Activated CD8-positive, alpha-beta T cell treated with anti-CD3 and anti-CD28 coated beads, Interleukin-2, amount 10 ng/mL, durations not matched to agents 7 days and 5 days (primary cell): ENCODE measurements at regions of chr12 and their contacts with region 1.

Region 1: GRCh38 chr12:8544295-8544694 is 3.6 kb upstream of the CLEC4E start:
- DNase-seq: peak; percentile 83
- ATAC-seq: peak; percentile 76
- H3K4me3 Mint-ChIP-seq: no peak overlapping the region
- H3K27ac Mint-ChIP-seq: no peak overlapping the region
- H3K4me1 Mint-ChIP-seq: peaks cover 9% of the 10 kb centered on the region
- H3K27me3 Mint-ChIP-seq: peaks cover 43% of the 10 kb centered on the region

Region 2: GRCh38 chr12:8519171-8519570 is 25.1 kb before region 1 on chr12:
- CTCF ChIA-PET with region 1: interaction called, 20 read pairs
- POLR2A ChIA-PET with region 1: no interaction called
- DNase-seq: no peak
- ATAC-seq: no peak
- H3K4me3 Mint-ChIP-seq: no peak overlapping the region
- H3K27ac Mint-ChIP-seq: no peak overlapping the region
- H3K4me1 Mint-ChIP-seq: no peaks in the 10 kb centered on the region
- H3K27me3 Mint-ChIP-seq: peaks cover 53% of the 10 kb centered on the region

Region 3: DNA sequence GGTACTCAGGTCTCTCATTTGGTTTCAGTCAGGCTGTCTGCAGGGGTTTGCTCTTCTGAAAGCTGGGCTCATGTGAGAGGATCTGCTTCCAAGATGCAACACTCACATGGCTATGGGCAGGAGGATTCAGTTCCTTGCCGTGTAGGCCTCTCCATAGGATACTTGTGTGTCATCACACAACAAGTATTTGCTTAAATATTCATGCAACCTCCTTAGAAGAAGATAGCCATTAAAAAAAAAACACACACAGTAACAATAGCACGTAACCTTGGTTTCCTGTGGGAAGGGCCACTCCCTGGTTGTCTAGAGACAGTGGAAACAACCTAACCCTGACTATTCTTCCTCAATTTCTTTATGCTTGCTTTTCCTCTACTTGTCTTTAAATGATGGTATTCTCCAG is 28.2 kb after region 1 on chr12:
- CTCF ChIA-PET with region 1: interaction called, 18 read pairs
- POLR2A ChIA-PET with region 1: no interaction called
- DNase-seq: no peak
- ATAC-seq: peak; percentile 47
- H3K4me3 Mint-ChIP-seq: no peak overlapping the region
- H3K27ac Mint-ChIP-seq: no peak overlapping the region
- H3K4me1 Mint-ChIP-seq: peaks cover 10% of the 10 kb centered on the region
- H3K27me3 Mint-ChIP-seq: no peaks in the 10 kb centered on the region

Region 4: DNA sequence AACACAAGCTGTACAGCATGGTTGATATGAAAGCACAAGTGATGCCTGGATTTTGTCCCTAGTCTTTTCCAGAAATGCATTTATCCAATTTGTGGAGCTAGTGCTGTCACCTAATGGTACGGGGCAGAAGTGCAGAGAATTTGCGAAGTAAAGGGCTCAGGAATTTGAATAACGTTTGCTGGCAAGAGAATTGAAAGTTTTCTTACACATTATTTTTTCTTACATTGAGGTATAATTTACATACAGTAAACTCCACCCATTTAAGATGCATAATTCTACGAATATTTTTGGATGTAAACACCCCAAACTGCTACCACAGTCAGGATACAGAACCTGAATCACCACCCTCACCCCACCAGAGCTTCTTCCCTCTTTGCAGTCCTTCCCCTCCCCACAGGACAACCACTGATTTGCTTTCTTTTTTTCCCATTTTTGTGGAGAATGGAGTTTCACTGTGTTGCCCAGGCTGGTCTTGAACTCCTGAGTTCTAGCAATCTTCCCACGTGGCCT is 64.8 kb after region 1 on chr12:
- CTCF ChIA-PET with region 1: interaction called, 34 read pairs
- POLR2A ChIA-PET with region 1: no interaction called
- DNase-seq: peak; percentile 28
- ATAC-seq: no peak
- H3K4me3 Mint-ChIP-seq: no peak overlapping the region
- H3K27ac Mint-ChIP-seq: no peak overlapping the region
- H3K4me1 Mint-ChIP-seq: peaks cover 10% of the 10 kb centered on the region
- H3K27me3 Mint-ChIP-seq: peaks cover 15% of the 10 kb centered on the region

Region 5: GRCh38 chr12:8668441-8668840 is 124.1 kb after region 1 on chr12:
- CTCF ChIA-PET with region 1: no interaction called
- POLR2A ChIA-PET with region 1: no interaction called
- DNase-seq: no peak
- ATAC-seq: no peak
- H3K4me3 Mint-ChIP-seq: no peak overlapping the region
- H3K27ac Mint-ChIP-seq: no peak overlapping the region
- H3K4me1 Mint-ChIP-seq: no peaks in the 10 kb centered on the region
- H3K27me3 Mint-ChIP-seq: peaks cover 13% of the 10 kb centered on the region

Region 6: DNA sequence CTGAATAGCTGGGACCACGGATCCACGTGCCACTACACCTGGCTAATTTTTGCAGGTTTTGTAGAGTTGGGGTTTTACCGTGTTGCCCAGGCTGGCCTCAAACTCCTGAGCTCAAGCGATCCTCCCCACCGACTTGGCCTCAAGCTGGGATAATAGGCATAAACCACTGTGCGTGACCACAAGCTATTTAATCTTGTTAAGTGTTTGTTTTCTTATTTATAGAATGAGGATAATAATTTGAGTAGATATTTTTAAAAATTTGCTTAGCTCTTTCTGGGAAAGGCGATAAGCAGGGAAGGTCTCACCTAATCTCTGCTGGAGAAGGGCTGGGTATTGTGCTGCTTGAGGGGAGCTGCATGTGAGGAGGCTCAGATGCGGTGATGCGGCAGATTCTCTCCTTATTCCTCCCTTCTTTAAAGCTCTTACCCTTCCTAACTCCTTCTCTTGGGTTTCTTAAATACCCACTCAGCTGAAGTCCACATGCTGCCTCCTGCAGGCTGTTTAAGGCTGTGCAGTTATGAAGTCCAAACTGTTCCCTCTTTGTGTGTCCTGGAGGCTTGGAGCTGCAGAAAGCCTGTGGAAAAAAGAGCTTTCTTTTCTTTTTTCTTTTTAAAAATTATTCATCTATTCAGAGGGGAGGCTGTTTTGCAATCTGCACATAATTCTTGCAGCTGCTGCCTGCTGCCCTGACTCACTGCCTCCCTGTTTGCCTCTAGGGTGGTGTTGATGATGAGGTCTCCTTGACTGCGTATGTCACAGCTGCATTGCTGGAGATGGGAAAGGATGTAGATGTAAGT is 316.1 kb after region 1 on chr12:
- CTCF ChIA-PET with region 1: interaction called, 23 read pairs
- POLR2A ChIA-PET with region 1: no interaction called
- DNase-seq: peak; percentile 43
- ATAC-seq: no peak
- H3K4me3 Mint-ChIP-seq: no peak overlapping the region
- H3K27ac Mint-ChIP-seq: no peak overlapping the region
- H3K4me1 Mint-ChIP-seq: no peaks in the 10 kb centered on the region
- H3K27me3 Mint-ChIP-seq: no peaks in the 10 kb centered on the region

Region 7: GRCh38 chr12:8876887-8877286 is 332.6 kb after region 1 on chr12:
- CTCF ChIA-PET with region 1: no interaction called
- POLR2A ChIA-PET with region 1: no interaction called
- DNase-seq: no peak
- ATAC-seq: no peak
- H3K4me3 Mint-ChIP-seq: no peak overlapping the region
- H3K27ac Mint-ChIP-seq: no peak overlapping the region
- H3K4me1 Mint-ChIP-seq: no peaks in the 10 kb centered on the region
- H3K27me3 Mint-ChIP-seq: peaks cover 8% of the 10 kb centered on the region